ENCODE measurements at regions of chrX and their contacts with region 1.

Region 1: GRCh38 chrX:18630934-18631333 is 41.0 kb downstream of the RS1 start:
- DNase-seq: no peak
- H3K4me3 ChIP-seq: no peak overlapping the region
- H3K27ac ChIP-seq: no peak overlapping the region
- H3K4me1 ChIP-seq: no peaks in the 10 kb centered on the region
- H3K27me3 ChIP-seq: no peaks in the 10 kb centered on the region
- CTCF ChIP-seq: no peak
- EP300 ChIP-seq: no peak
- POLR2A ChIP-seq: no peak

Region 2: DNA sequence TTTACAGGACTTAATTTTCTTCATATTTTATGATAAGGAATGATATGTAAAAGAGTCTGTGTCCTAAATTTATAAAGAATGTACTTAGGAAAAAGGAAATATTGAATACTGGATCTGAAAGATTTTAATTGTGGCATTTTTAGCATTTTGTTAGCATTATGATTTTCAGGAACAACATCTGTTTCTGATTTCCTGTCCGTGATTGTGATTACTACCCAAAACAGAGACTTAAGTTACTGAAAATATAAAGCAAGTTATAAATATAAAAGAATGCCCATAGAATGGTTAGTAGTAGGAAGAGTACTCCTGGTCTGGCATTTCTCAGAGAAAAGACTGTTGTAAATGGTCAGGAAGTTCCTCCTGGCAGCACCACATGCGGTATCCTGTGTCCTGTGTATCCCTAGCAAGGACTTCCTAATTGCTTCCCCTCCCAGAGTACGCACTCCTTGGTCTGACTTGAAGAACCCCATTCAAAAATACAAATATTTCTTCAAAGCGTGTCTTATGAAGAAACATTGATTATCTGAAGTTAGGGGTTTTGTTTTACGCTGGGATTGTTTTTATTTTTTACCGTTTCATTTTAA is 47.9 kb before region 1 on chrX:
- in situ Hi-C with region 1: no loop called
- intact Hi-C with region 1: loop called (anchors 10 kb)
- DNase-seq: no peak
- H3K4me3 ChIP-seq: no peak overlapping the region
- H3K27ac ChIP-seq: no peak overlapping the region
- H3K4me1 ChIP-seq: no peaks in the 10 kb centered on the region
- H3K27me3 ChIP-seq: no peaks in the 10 kb centered on the region
- CTCF ChIP-seq: no peak
- EP300 ChIP-seq: no peak
- POLR2A ChIP-seq: no peak

Region 3: GRCh38 chrX:19110642-19111041 is 479.7 kb after region 1 on chrX:
- in situ Hi-C with region 1: no loop called
- intact Hi-C with region 1: no loop called
- DNase-seq: no peak
- H3K4me3 ChIP-seq: no peak overlapping the region
- H3K27ac ChIP-seq: no peak overlapping the region
- H3K4me1 ChIP-seq: no peaks in the 10 kb centered on the region
- H3K27me3 ChIP-seq: no peaks in the 10 kb centered on the region
- CTCF ChIP-seq: no peak
- EP300 ChIP-seq: no peak
- POLR2A ChIP-seq: no peak

Region 4: DNA sequence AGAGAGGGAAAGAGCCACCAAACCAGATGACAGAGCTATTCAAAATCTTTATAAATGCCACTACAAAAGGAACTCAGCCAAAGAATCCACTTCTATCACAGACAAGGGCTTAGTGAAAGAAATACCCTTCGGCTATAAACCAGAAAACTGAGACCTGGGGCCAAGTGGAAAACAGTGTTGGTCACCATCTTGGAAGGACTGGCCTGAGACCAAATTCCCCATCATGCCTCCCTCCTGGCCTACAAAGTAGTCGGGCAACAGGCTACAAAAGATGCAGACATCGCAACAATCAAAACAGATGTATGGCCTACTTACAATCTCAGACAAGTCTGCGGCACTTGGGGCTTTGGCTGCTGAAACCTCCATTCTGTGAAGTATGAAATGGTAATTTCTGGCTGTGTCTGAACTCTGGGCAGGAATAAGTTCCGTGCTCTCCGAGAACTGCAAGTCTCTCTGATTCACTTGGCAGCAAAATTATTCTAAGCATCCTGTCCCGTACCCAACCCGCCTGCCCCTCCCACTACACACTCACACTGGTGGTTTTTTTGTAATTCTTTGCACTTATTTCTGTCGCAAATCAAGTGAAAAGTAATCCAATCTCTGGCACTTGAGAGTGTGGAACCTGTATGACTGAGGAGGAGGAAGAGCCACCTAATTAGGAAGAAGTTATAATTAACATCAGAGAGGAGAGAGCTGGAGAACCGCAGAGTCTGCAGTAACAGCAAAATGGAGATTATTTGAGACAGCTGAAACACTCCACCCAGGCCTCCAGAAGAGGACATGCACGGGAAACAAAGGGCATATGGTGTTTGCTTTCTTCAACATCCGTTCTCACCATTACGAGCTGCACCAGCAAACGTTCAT is 1168.6 kb after region 1 on chrX:
- in situ Hi-C with region 1: no loop called
- intact Hi-C with region 1: loop called (anchors 5 kb)
- DNase-seq: no peak
- H3K4me3 ChIP-seq: peak overlapping the region in 1 of 4 donors; percentile 2
- H3K27ac ChIP-seq: peak overlapping the region; percentile 20 to 59 (median 42)
- H3K4me1 ChIP-seq: peaks cover 0 to 10% (median 0%) of the 10 kb centered on the region in 4 donors
- H3K27me3 ChIP-seq: no peaks in the 10 kb centered on the region
- CTCF ChIP-seq: no peak
- EP300 ChIP-seq: no peak
- POLR2A ChIP-seq: no peak